Activated CD8-positive, alpha-beta T cell treated with anti-CD3 and anti-CD28 coated beads for 36 hours (primary cell): ENCODE measurements at regions of chr17 and their contacts with region 1.

Region 1: DNA sequence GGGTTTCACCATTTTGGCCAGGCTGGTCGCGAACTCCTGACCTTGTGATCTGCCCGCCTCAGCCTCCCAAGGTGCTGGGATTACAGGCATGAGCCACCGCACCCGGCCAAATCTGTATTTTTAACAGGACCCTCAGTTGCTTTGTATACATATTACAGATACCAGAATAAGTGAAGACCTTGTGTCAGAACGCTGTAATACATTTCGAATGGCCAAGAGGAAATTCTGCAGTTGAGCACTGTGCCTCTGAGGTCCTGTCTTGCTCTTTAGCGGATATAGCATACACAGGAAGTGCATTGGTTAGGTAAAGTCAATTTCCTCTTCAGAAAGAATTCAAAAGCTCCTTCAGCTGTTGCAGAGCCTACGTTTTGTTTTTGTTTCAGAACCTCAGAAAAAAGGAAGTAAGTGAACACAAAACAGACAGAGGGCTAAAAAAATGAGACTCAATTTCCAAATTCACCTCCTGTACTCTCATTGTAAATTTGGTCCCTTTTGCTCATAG is 15.7 kb downstream of the CRLF3 start:
- DNase-seq: peak; percentile 54
- ATAC-seq: peak; percentile 76
- H3K4me3 Mint-ChIP-seq: peak overlapping the region; percentile 82
- H3K27ac Mint-ChIP-seq: peak overlapping the region; percentile 99
- H3K4me1 Mint-ChIP-seq: peaks cover 65% of the 10 kb centered on the region
- H3K27me3 Mint-ChIP-seq: no peaks in the 10 kb centered on the region
- CTCF ChIP-seq: no peak

Region 2: GRCh38 chr17:30761058-30761457 is 47.8 kb before region 1 on chr17:
- CTCF ChIA-PET with region 1: no interaction called
- POLR2A ChIA-PET with region 1: no interaction called
- intact Hi-C with region 1: no loop called
- DNase-seq: no peak
- ATAC-seq: no peak
- H3K4me3 Mint-ChIP-seq: no peak overlapping the region
- H3K27ac Mint-ChIP-seq: peak overlapping the region; percentile 32
- H3K4me1 Mint-ChIP-seq: no peaks in the 10 kb centered on the region
- H3K27me3 Mint-ChIP-seq: no peaks in the 10 kb centered on the region
- CTCF ChIP-seq: no peak

Region 3: GRCh38 chr17:30788918-30789317 is 19.9 kb before region 1 on chr17:
- CTCF ChIA-PET with region 1: interaction called, 4 read pairs
- POLR2A ChIA-PET with region 1: interaction called, 13 read pairs
- intact Hi-C with region 1: no loop called
- DNase-seq: no peak
- ATAC-seq: no peak
- H3K4me3 Mint-ChIP-seq: no peak overlapping the region
- H3K27ac Mint-ChIP-seq: peak overlapping the region; percentile 73
- H3K4me1 Mint-ChIP-seq: peaks cover 20% of the 10 kb centered on the region
- H3K27me3 Mint-ChIP-seq: no peaks in the 10 kb centered on the region
- CTCF ChIP-seq: no peak

Region 4: DNA sequence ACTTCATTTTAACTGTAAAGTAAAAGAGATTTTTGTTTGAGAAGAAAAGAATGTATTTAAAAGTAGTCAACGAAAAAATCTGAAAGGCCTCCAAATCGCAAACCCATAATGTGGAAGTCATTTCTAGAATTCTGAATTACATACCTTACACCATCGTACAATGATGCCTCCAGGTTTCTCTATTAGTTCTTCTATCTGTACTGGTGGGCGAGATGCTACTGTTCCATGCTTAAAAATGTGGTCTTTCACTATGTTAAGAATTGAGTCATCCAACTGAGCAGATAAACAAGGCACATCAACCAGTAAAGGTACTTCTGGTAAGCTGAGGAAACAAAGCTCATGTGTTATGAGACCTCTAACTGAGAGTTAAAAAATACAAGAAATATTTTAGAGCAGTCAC is 12.8 kb before region 1 on chr17:
- CTCF ChIA-PET with region 1: interaction called, 10 read pairs
- POLR2A ChIA-PET with region 1: interaction called, 21 read pairs
- intact Hi-C with region 1: no loop called
- DNase-seq: no peak
- ATAC-seq: peak; percentile 97
- H3K4me3 Mint-ChIP-seq: no peak overlapping the region
- H3K27ac Mint-ChIP-seq: peak overlapping the region; percentile 87
- H3K4me1 Mint-ChIP-seq: peaks cover 17% of the 10 kb centered on the region
- H3K27me3 Mint-ChIP-seq: no peaks in the 10 kb centered on the region
- CTCF ChIP-seq: no peak